ENCODE measurements at regions of chr12 and their contacts with region 1.

Region 1: DNA sequence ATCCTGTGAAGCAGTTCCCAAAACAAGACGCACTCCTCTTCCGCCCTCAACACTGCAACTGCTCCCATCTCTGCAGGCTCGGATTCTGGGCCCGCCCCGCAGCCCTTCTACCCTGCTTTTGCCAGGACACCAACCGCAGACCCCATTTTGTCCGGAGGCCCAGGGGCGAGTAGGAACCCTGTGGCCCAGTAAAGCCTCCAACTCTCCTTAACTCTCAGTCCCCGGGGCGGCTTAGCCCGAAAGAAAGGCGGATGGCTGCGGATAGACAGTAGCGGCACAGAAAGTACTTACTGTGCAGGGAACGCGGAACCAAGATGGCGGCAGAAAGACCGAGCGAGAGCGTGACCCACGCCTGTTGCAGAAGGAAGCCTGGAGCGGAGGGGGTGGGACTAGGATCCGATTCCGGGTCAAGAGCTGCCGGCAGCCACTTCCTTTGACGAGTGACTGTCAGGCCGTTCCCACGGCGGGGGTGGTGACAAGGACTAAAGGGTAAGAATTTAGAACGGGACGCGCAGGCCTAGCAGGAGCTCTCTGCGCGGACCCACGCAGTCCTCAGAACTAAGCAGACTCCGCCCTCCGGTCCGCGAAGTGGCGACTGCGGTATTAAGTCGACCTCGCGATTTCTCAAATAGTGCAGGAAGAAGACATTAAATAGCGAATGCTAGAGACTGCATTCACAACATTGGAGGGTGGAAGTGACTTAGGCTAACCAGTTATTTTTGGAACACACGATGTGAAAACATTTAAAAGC is at the start of gene NACA:
- DNase-seq: peak; percentile 99 to 100
- H3K4me3 ChIP-seq: peak within 1 kb of the TSS; percentile 63 to 75
- H3K27ac ChIP-seq: peak within 1 kb of the TSS; percentile 80 to 88
- H3K4me1 ChIP-seq: peaks cover 0 to 50% (median 37%) of the 10 kb centered on the region in 4 donors
- H3K27me3 ChIP-seq: no peaks in the 10 kb centered on the region
- CTCF ChIP-seq: no peak

Region 2: DNA sequence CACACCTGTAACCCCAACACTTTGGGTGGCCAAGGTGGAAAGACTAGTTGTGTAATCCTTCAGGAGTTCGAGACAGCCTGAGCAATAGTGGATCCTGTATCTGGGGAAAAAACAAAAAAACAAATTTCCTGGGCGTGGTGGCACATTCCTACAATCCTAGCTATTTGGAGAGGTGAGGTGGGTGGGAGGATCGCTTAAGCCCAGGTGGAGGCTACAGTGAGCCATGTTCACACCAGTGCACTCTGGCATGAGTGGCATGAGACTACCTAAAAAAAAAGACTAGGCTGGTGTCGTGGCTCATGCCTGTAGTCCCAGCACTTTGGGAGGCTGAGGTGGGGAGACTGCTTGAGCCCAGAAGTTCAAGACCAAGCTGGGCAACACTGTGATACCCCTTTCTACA is 54.3 kb before region 1 on chr12:
- intact Hi-C with region 1: no loop called
- DNase-seq: peak in 1 of 2 donors; percentile 34
- H3K4me3 ChIP-seq: no peak overlapping the region
- H3K27ac ChIP-seq: no peak overlapping the region
- H3K4me1 ChIP-seq: peaks cover 0 to 22% (median 2%) of the 10 kb centered on the region in 4 donors
- H3K27me3 ChIP-seq: no peaks in the 10 kb centered on the region
- CTCF ChIP-seq: no peak

Region 3: DNA sequence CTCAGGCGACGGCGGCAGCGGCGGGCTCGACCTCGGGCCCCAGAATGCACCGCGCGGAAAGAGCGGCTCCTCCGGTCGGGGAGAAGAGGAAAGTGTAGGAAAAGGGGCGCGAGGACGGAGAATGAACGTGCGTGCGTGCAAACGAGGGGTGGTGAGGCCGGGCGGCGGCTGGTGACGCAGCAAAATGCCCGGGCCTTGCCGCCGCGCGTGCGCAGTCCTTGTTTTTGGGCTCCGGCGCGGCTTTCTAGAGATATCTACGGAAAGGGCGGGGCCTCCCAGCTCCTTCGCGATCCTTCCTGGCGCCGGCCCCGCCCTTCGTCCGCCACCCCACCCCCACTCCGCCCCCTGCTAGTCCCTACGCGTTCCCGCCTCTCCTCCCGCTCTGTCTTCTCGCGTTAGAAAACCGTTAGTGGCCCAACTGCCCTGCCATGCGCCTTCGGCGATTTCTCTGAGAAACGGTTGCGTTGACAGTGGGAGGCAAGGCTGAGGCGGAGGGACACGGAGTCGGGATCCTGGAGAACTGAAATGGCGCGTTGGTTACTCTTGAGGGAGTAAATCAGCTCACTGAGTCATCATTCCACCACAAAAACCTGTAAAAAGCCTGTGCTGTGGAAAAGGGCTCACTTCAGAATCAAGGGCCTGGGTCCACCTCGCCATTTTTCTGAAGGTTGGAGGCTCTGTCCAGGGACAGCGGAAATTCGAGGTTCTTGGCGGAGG is 36.9 kb before region 1 on chr12 and contains the start of gene PTGES3:
- intact Hi-C with region 1: loop called (anchors 2 kb)
- DNase-seq: peak; percentile 96 to 99
- H3K4me3 ChIP-seq: peak within 1 kb of the TSS; percentile 80 to 97
- H3K27ac ChIP-seq: peak within 1 kb of the TSS; percentile 98 to 100
- H3K4me1 ChIP-seq: peaks cover 0 to 45% (median 16%) of the 10 kb centered on the region in 4 donors
- H3K27me3 ChIP-seq: no peaks in the 10 kb centered on the region
- CTCF ChIP-seq: no peak

Measured in tibial artery (tissue), 4 donors.